ENCODE measurements at regions of chr7 and their contacts with region 1.

Region 1: GRCh38 chr7:15561835-15562234 is at the start of gene AGMO:
- DNase-seq: peak; percentile 69 to 76
- ATAC-seq: peak; percentile 61 to 87 (median 78)
- H3K4me3 ChIP-seq: peak within 1 kb of the TSS in 9 of 10 donors; percentile 11 to 48 (median 39)
- H3K27ac ChIP-seq: peak within 1 kb of the TSS; percentile 62 to 89 (median 71)
- H3K4me1 ChIP-seq: peaks cover 0 to 49% (median 8%) of the 10 kb centered on the region in 9 donors
- H3K27me3 ChIP-seq: no peaks in the 10 kb centered on the region
- CTCF ChIP-seq: peak in 5 of 9 donors; percentile 8 to 43 (median 35)
- total RNA-seq, gene AGMO: 0.12 to 0.70 (median 0.40) TPM

Region 2: GRCh38 chr7:15326044-15326644 is 235.7 kb before region 1 on chr7:
- intact Hi-C with region 1: loop called in 6 of 10 experiments (anchors 5 to 10 kb)
- DNase-seq: no peak
- ATAC-seq: no peak
- H3K4me3 ChIP-seq: no peak overlapping the region
- H3K27ac ChIP-seq: no peak overlapping the region
- H3K4me1 ChIP-seq: peaks cover 0 to 10% (median 0%) of the 10 kb centered on the region in 9 donors
- H3K27me3 ChIP-seq: no peaks in the 10 kb centered on the region
- CTCF ChIP-seq: peak; percentile 32 to 79 (median 60)

Region 3: GRCh38 chr7:15515252-15515651 is 46.6 kb before region 1 on chr7:
- intact Hi-C with region 1: loop called in 1 of 10 experiments (anchors 10 kb)
- DNase-seq: peak in 1 of 2 donors; percentile 10
- ATAC-seq: peak in 2 of 8 donors; percentile 11 to 31
- H3K4me3 ChIP-seq: peak overlapping the region in 3 of 10 donors; percentile 11 to 16 (median 13)
- H3K27ac ChIP-seq: peak overlapping the region in 6 of 10 donors; percentile 17 to 68 (median 37)
- H3K4me1 ChIP-seq: peaks cover 0 to 8% (median 0%) of the 10 kb centered on the region in 9 donors
- H3K27me3 ChIP-seq: no peaks in the 10 kb centered on the region
- CTCF ChIP-seq: no peak

Region 4: GRCh38 chr7:15669443-15670090 is 107.7 kb after region 1 on chr7:
- intact Hi-C with region 1: loop called in 1 of 10 experiments (anchors 10 kb)
- DNase-seq: no peak
- ATAC-seq: no peak
- H3K4me3 ChIP-seq: no peak overlapping the region
- H3K27ac ChIP-seq: no peak overlapping the region
- H3K4me1 ChIP-seq: peaks cover 0 to 41% (median 0%) of the 10 kb centered on the region in 9 donors
- H3K27me3 ChIP-seq: no peaks in the 10 kb centered on the region
- CTCF ChIP-seq: no peak

Region 5: DNA sequence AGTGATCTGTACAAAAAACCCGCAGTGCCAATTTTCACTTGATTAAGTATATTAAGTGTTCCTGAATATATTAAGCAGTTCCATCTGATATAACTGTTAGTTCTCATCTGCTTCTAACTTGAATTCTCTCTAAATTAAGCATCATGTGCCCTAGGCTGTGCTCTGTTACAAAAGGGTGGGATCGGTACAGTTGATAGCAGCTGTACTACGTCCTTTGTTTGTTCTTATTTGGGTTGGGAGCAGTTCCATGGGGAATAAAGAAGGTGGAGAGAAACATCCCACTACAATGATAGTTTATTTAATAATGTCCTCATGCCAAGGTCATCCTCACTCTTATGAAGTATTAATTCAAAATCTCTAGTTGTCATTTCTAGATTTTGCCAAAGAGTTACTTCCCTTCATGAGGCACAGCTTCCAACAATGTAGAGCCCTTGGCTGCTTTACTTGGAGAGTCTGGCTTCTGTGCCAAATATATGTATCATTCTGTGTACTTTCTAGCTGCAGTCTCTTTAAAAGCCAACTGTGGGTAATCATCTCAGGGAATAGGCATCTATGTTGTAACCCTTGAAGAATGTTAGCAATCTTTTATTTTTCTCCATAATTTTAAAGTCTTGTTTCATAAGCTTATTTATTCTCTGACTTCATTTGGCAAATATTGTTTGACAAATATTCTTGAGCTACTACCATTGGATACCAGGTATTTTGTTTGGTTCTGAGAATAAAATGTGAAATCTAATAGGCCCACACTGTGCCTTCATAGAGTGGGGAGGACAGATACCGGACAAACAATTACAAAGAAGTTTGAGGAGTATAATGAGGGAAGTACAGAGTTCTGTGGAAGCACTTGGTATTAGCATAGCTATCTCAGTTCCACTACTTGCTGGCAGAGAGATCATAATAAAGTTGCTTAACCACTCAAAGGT is 1714.2 kb after region 1 on chr7:
- intact Hi-C with region 1: loop called in 1 of 10 experiments (anchors 5 kb)
- DNase-seq: no peak
- ATAC-seq: peak; percentile 74 to 96 (median 88)
- H3K4me3 ChIP-seq: no peak overlapping the region
- H3K27ac ChIP-seq: peak overlapping the region; percentile 2 to 77 (median 50)
- H3K4me1 ChIP-seq: peaks cover 0 to 28% (median 20%) of the 10 kb centered on the region in 9 donors
- H3K27me3 ChIP-seq: no peaks in the 10 kb centered on the region
- CTCF ChIP-seq: no peak